CD14-positive monocyte (primary cell): ENCODE measurements at regions of chr9 and their contacts with region 1.

Region 1: GRCh38 chr9:132288361-132288760 is 66.4 kb downstream of the SETX start:
- DNase-seq: no peak
- H3K4me3 ChIP-seq: no peak overlapping the region
- H3K4me3 Mint-ChIP-seq: no peak overlapping the region
- H3K27ac ChIP-seq: no peak overlapping the region
- H3K27ac Mint-ChIP-seq: no peak overlapping the region
- H3K4me1 ChIP-seq: no peaks in the 10 kb centered on the region
- H3K4me1 Mint-ChIP-seq: no peaks in the 10 kb centered on the region
- H3K27me3 ChIP-seq: no peaks in the 10 kb centered on the region
- H3K27me3 Mint-ChIP-seq: no peaks in the 10 kb centered on the region
- CTCF ChIP-seq: no peak

Region 2: GRCh38 chr9:131149688-131150053 is 1138.7 kb before region 1 on chr9:
- intact Hi-C with region 1: loop called in 1 of 2 experiments (anchors 10 kb)
- DNase-seq: no peak
- H3K4me3 ChIP-seq: no peak overlapping the region
- H3K4me3 Mint-ChIP-seq: no peak overlapping the region
- H3K27ac ChIP-seq: no peak overlapping the region
- H3K27ac Mint-ChIP-seq: peak overlapping the region in 2 of 7 donors; percentile 20 to 23
- H3K4me1 ChIP-seq: no peaks in the 10 kb centered on the region
- H3K4me1 Mint-ChIP-seq: no peaks in the 10 kb centered on the region
- H3K27me3 ChIP-seq: no peaks in the 10 kb centered on the region
- H3K27me3 Mint-ChIP-seq: no peaks in the 10 kb centered on the region
- CTCF ChIP-seq: no peak

Region 3: GRCh38 chr9:132231019-132231701 is 57.2 kb before region 1 on chr9:
- intact Hi-C with region 1: no loop called
- DNase-seq: no peak
- H3K4me3 ChIP-seq: no peak overlapping the region
- H3K4me3 Mint-ChIP-seq: no peak overlapping the region
- H3K27ac ChIP-seq: no peak overlapping the region
- H3K27ac Mint-ChIP-seq: peak overlapping the region in 1 of 7 donors; percentile 40
- H3K4me1 ChIP-seq: peaks cover 3 to 4% of the 10 kb centered on the region in 2 donors
- H3K4me1 Mint-ChIP-seq: peaks cover 3% of the 10 kb centered on the region
- H3K27me3 ChIP-seq: no peaks in the 10 kb centered on the region
- H3K27me3 Mint-ChIP-seq: peaks cover 7 to 12% (median 12%) of the 10 kb centered on the region in 3 donors
- CTCF ChIP-seq: no peak

Region 4: DNA sequence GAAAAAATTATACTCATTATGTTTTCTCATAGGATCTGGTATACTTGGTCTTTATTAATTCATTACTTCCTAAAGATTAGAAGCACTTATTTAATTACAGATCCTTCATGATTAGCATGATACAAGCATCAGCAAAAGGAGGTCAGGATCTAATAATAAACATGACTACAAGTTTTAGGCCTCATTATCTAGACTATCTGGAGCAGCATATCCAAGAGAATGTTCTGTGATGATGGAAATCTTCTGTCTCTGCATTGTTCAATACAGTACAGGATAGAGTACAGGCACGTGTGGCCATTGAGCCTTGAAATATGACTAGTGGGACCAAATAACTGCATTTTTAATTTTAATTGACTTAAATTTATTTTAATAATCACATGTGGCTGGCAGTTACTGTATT is 45.2 kb after region 1 on chr9:
- intact Hi-C with region 1: loop called in 1 of 2 experiments (anchors 10 kb)
- DNase-seq: no peak
- H3K4me3 ChIP-seq: no peak overlapping the region
- H3K4me3 Mint-ChIP-seq: no peak overlapping the region
- H3K27ac ChIP-seq: no peak overlapping the region
- H3K27ac Mint-ChIP-seq: no peak overlapping the region
- H3K4me1 ChIP-seq: no peaks in the 10 kb centered on the region
- H3K4me1 Mint-ChIP-seq: no peaks in the 10 kb centered on the region
- H3K27me3 ChIP-seq: no peaks in the 10 kb centered on the region
- H3K27me3 Mint-ChIP-seq: no peaks in the 10 kb centered on the region
- CTCF ChIP-seq: no peak

Region 5: GRCh38 chr9:132367613-132368313 is 79.4 kb after region 1 on chr9:
- intact Hi-C with region 1: no loop called
- DNase-seq: no peak
- H3K4me3 ChIP-seq: no peak overlapping the region
- H3K4me3 Mint-ChIP-seq: no peak overlapping the region
- H3K27ac ChIP-seq: peak overlapping the region; percentile 30 to 50
- H3K27ac Mint-ChIP-seq: peak overlapping the region; percentile 46 to 94 (median 79)
- H3K4me1 ChIP-seq: peaks cover 67 to 78% of the 10 kb centered on the region in 2 donors
- H3K4me1 Mint-ChIP-seq: peaks cover 76% of the 10 kb centered on the region
- H3K27me3 ChIP-seq: no peaks in the 10 kb centered on the region
- H3K27me3 Mint-ChIP-seq: peaks cover 0 to 4% (median 4%) of the 10 kb centered on the region in 3 donors
- CTCF ChIP-seq: no peak